ENCODE measurements at regions of chr6 and their contacts with region 1.

Region 1: GRCh38 chr6:11665604-11666326 is 112.8 kb downstream of the ADTRP start:
- DNase-seq: no peak
- H3K4me3 Mint-ChIP-seq: no peak overlapping the region
- H3K27ac Mint-ChIP-seq: peak overlapping the region; percentile 76
- H3K4me1 Mint-ChIP-seq: peaks cover 12% of the 10 kb centered on the region
- H3K27me3 Mint-ChIP-seq: peaks cover 2% of the 10 kb centered on the region

Region 2: DNA sequence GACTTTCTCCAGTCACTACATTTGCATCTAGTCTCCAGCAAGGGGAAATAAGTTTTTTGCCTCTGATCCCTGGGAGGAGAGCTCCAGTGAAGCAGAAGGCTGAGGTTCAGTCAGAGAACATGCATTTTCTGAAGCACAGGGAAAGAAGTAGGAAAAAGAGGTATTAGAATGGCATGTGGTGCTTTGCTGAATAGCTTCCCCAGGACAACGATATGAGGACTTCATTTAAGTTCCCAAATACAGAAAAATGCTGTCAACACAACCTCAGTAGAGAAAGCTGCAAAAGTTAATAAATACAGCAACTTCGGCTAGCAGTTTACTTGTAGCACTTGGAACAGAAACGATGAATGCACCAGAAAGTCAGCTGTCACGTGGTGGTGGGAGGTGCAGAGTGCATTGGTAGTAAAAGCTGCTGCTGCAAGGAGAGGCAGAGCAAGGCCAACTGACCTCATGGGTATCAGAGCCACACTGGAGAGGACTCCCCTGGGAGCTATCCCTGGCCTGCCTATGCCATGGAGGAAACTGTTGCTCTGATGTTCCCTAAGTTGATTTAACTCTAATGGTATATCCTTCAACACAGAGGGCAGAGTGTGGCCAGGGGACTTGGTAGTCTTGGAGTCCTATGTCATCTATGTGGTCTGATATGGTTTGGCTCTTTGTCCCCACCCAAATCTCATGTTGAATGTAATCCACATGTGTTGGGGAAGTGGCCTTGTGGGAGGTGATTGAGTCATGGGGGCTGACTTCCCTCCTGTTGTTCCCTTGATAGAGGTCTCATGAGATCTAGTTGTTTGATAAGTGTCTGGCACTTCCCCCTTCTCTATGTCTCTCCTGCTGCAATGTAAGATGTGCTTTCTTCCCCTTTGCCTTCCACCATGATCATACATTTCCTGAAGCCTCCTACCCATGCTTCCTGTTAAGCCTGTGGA is 26.9 kb after region 1 on chr6:
- intact Hi-C with region 1: loop called (anchors 2 kb)
- DNase-seq: peak; percentile 46
- H3K4me3 Mint-ChIP-seq: no peak overlapping the region
- H3K27ac Mint-ChIP-seq: peak overlapping the region; percentile 23
- H3K4me1 Mint-ChIP-seq: peaks cover 13% of the 10 kb centered on the region
- H3K27me3 Mint-ChIP-seq: no peaks in the 10 kb centered on the region

Measured in activated CD4-positive, alpha-beta T cell treated with anti-CD3 and anti-CD28 coated beads, Interleukin-2, amount 10 ng/mL, durations not matched to agents 24 days and 14 days (primary cell).